Tibial artery (tissue), 4 donors: ENCODE measurements at regions of chr2 and their contacts with region 1.

Region 1: GRCh38 chr2:102020596-102021181 is 28.9 kb downstream of the IL1R2 start:
- DNase-seq: peak; percentile 91 to 94
- H3K4me3 ChIP-seq: no peak overlapping the region
- H3K27ac ChIP-seq: peak overlapping the region in 1 of 2 donors; percentile 12
- H3K4me1 ChIP-seq: peaks cover 0 to 11% (median 6%) of the 10 kb centered on the region in 4 donors
- H3K27me3 ChIP-seq: no peaks in the 10 kb centered on the region
- CTCF ChIP-seq: peak; percentile 97 to 99

Region 2: GRCh38 chr2:102155642-102156491 is 135.2 kb after region 1 on chr2:
- intact Hi-C with region 1: loop called (anchors 5 kb)
- DNase-seq: peak in 1 of 2 donors; percentile 76
- H3K4me3 ChIP-seq: no peak overlapping the region
- H3K27ac ChIP-seq: peak overlapping the region; percentile 41 to 65
- H3K4me1 ChIP-seq: peaks cover 0 to 14% (median 0%) of the 10 kb centered on the region in 4 donors
- H3K27me3 ChIP-seq: no peaks in the 10 kb centered on the region
- CTCF ChIP-seq: no peak

Region 3: GRCh38 chr2:102166189-102166845 is 145.6 kb after region 1 on chr2:
- intact Hi-C with region 1: loop called (anchors 2 kb)
- DNase-seq: peak; percentile 21 to 65
- H3K4me3 ChIP-seq: no peak overlapping the region
- H3K27ac ChIP-seq: no peak overlapping the region
- H3K4me1 ChIP-seq: no peaks in the 10 kb centered on the region
- H3K27me3 ChIP-seq: no peaks in the 10 kb centered on the region
- CTCF ChIP-seq: peak; percentile 61 to 66

Region 4: DNA sequence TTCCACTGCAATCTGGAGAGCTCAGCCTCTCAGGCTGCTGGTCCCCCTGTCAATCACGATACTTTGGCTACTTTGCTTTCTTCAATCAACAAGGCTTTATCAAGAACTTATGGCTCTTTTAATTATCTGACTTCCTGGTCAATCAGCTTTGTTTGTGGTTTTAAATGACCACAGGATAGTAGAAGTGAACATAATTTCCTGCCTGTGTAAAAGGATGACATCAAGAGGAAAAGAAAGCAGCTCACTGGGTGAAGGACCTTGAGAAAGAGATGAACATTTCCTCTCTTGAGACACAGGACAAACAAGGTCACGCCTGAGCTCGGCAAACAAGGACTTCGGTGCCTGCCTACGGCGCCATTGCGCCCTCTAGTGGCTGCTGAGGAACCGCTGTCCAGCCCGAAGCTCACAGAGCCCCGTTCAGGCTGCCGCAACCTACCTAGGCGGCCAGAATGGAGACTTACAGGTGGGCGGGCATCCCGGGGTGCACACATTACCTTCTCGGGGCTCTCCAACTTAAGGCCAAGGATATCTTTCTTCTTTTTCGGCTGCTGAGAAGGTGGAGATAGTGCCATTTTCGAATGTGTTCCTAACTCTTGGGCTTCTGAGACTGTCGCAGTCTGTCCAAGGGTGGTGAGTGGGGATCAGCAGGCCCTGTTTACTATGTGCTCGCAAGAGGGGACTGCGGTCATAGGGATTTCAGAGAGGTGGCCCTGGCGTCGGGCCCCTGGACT is 220.1 kb after region 1 on chr2:
- intact Hi-C with region 1: loop called (anchors 2 kb)
- DNase-seq: peak; percentile 89 to 94
- H3K4me3 ChIP-seq: no peak overlapping the region
- H3K27ac ChIP-seq: peak overlapping the region; percentile 49 to 58
- H3K4me1 ChIP-seq: peaks cover 0 to 19% (median 8%) of the 10 kb centered on the region in 4 donors
- H3K27me3 ChIP-seq: no peaks in the 10 kb centered on the region
- CTCF ChIP-seq: peak; percentile 97

Region 5: DNA sequence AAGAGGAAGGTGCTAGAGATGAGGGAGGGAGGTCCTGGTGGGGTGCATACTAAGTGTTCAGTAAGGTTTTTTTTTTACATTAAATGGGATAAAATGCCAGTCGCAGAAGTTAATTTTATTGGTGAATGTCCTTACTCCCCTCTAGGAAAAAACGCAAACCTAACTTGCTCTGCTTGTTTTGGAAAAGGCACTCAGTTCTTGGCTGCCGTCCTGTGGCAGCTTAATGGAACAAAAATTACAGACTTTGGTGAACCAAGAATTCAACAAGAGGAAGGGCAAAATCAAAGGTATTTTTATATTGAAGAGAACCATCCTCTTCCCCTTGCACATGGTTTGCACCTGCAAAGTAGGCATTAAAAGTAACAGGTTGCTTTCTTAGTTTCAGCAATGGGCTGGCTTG is 322.2 kb after region 1 on chr2:
- intact Hi-C with region 1: loop called (anchors 5 kb)
- DNase-seq: peak in 1 of 2 donors; percentile 22
- H3K4me3 ChIP-seq: no peak overlapping the region
- H3K27ac ChIP-seq: peak overlapping the region in 1 of 2 donors; percentile 43
- H3K4me1 ChIP-seq: peaks cover 0 to 15% (median 4%) of the 10 kb centered on the region in 4 donors
- H3K27me3 ChIP-seq: no peaks in the 10 kb centered on the region
- CTCF ChIP-seq: peak; percentile 29 to 30